ENCODE measurements at regions of chr14 and their contacts with region 1.

Region 1: GRCh38 chr14:21846227-21846885 is 172.7 kb upstream of the OR4E1 start:
- DNase-seq: peak; percentile 44 to 62 (median 61)
- H3K4me3 ChIP-seq: no peak overlapping the region
- H3K27ac ChIP-seq: no peak overlapping the region
- H3K4me1 ChIP-seq: no peaks in the 10 kb centered on the region
- H3K27me3 ChIP-seq: peaks cover 0 to 2% (median 0%) of the 10 kb centered on the region in 5 experiments

Region 2: DNA sequence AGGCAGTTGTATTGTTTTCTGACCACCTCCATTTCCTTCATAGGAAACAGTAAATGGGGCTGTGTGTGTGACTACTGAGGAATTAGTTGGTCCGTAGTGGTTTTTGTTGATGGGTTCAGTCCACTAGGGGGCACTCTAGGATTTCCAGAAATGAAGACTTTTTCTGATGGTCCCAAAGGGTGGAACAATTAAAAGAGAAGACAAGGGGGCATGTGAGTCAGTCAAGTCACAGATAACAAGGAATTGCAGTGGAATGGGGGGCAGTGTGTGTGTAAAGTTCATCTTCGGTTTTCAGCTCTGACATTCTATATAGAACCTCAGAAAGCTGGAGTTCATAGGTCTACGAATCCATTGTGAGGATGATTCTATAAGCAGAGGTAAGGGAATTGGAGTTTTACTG is 13.8 kb after region 1 on chr14:
- CTCF ChIA-PET with region 1: interaction called, 28 read pairs
- POLR2A ChIA-PET with region 1: no interaction called
- DNase-seq: peak; percentile 55 to 68 (median 56)
- H3K4me3 ChIP-seq: no peak overlapping the region
- H3K27ac ChIP-seq: no peak overlapping the region
- H3K4me1 ChIP-seq: no peaks in the 10 kb centered on the region
- H3K27me3 ChIP-seq: no peaks in the 10 kb centered on the region

Region 3: GRCh38 chr14:22112004-22112403 is 265.6 kb after region 1 on chr14:
- CTCF ChIA-PET with region 1: no interaction called
- POLR2A ChIA-PET with region 1: no interaction called
- DNase-seq: peak in 2 of 3 donors; percentile 49 to 66
- H3K4me3 ChIP-seq: no peak overlapping the region
- H3K27ac ChIP-seq: no peak overlapping the region
- H3K4me1 ChIP-seq: peaks cover 0 to 7% (median 1%) of the 10 kb centered on the region in 4 experiments
- H3K27me3 ChIP-seq: no peaks in the 10 kb centered on the region

Measured in common myeloid progenitor, CD34-positive (primary cell).